A549 (cell line): ENCODE measurements at regions of chr15 and their contacts with region 1.

Region 1: GRCh38 chr15:91237196-91237844 is 137.3 kb downstream of the SV2B start:
- DNase-seq: no peak
- ATAC-seq: no peak
- H3K4me3 ChIP-seq: no peak overlapping the region
- H3K27ac ChIP-seq: no peak overlapping the region
- H3K4me1 ChIP-seq: no peaks in the 10 kb centered on the region
- CTCF ChIP-seq: no peak
- EP300 ChIP-seq: no peak
- POLR2A ChIP-seq: no peak
- RAD21 ChIP-seq: no peak

Region 2: GRCh38 chr15:90886041-90886614 is 351.2 kb before region 1 on chr15:
- CTCF ChIA-PET with region 1: no interaction called
- POLR2A ChIA-PET with region 1: no interaction called
- DNase-seq: peak in 1 of 2 experiments; percentile 61
- ATAC-seq: peak; percentile 57 to 82; a peak in 5 of 6 replicates
- H3K4me3 ChIP-seq: no peak overlapping the region
- H3K27ac ChIP-seq: peak overlapping the region in 1 of 2 experiments; percentile 19; a peak in 1 of 6 replicates
- H3K4me1 ChIP-seq: no peaks in the 10 kb centered on the region
- CTCF ChIP-seq: peak; percentile 99
- EP300 ChIP-seq: no peak
- POLR2A ChIP-seq: no peak
- RAD21 ChIP-seq: peak; percentile 100

Region 3: GRCh38 chr15:91224755-91225380 is 12.5 kb before region 1 on chr15:
- CTCF ChIA-PET with region 1: interaction called, 18 read pairs
- POLR2A ChIA-PET with region 1: no interaction called
- DNase-seq: peak; percentile 66 to 80
- ATAC-seq: peak; percentile 76 to 91
- H3K4me3 ChIP-seq: no peak overlapping the region
- H3K27ac ChIP-seq: no peak overlapping the region
- H3K4me1 ChIP-seq: no peaks in the 10 kb centered on the region
- CTCF ChIP-seq: peak; percentile 76
- EP300 ChIP-seq: no peak
- POLR2A ChIP-seq: no peak
- RAD21 ChIP-seq: peak; percentile 62 to 80; a peak in 4 of 5 replicates

Region 4: GRCh38 chr15:91253605-91254004 is 16.3 kb after region 1 on chr15:
- CTCF ChIA-PET with region 1: no interaction called
- POLR2A ChIA-PET with region 1: no interaction called
- DNase-seq: no peak
- ATAC-seq: no peak
- H3K4me3 ChIP-seq: no peak overlapping the region
- H3K27ac ChIP-seq: no peak overlapping the region
- H3K4me1 ChIP-seq: no peaks in the 10 kb centered on the region
- CTCF ChIP-seq: no peak
- EP300 ChIP-seq: no peak
- POLR2A ChIP-seq: no peak
- RAD21 ChIP-seq: no peak

Region 5: GRCh38 chr15:91369823-91370222 is 132.5 kb after region 1 on chr15:
- CTCF ChIA-PET with region 1: no interaction called
- POLR2A ChIA-PET with region 1: no interaction called
- DNase-seq: no peak
- ATAC-seq: no peak
- H3K4me3 ChIP-seq: no peak overlapping the region
- H3K27ac ChIP-seq: no peak overlapping the region
- H3K4me1 ChIP-seq: no peaks in the 10 kb centered on the region
- CTCF ChIP-seq: no peak
- EP300 ChIP-seq: no peak
- POLR2A ChIP-seq: no peak
- RAD21 ChIP-seq: no peak